ENCODE measurements at regions of chr3 and their contacts with region 1.

Region 1: DNA sequence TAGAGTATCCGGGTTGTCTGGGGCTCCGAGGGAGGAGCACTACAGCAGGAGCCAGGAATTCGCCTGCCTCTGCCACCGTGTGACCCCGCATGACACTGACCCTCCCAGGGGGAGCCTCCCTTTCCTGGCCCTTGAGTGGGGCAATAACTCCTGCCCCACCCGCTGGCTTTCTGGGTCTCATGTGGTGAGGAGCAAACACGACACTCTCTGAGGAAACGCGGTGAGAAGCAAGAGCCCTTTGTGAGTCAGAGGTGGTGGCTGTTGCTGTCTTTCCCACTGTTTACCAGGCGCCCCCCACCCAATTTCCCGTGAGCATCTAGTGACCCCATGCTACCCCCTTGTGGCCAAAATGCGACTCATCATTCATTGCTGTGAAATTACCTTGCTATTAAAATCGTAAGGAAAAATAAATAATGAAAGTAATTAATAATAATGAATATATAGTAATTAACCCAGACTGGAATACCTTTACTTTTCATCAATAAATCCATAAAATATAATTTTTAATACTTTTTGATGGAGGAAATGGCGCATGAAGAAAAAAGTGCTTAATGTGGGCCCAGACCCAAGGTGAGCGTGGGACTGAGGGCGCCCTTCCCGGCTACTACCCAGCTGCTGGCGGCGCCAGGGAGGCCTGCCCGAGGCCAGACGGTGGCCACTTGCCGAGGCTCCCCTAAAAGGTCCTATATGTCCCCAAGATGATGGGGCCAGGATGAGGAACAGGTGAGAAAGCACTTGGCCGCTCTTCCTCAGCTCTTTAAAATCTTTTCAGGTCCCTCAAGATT is 29.3 kb downstream of the CCNL1 start:
- DNase-seq: peak; percentile 48
- CTCF ChIP-seq: peak; percentile 61

Region 2: DNA sequence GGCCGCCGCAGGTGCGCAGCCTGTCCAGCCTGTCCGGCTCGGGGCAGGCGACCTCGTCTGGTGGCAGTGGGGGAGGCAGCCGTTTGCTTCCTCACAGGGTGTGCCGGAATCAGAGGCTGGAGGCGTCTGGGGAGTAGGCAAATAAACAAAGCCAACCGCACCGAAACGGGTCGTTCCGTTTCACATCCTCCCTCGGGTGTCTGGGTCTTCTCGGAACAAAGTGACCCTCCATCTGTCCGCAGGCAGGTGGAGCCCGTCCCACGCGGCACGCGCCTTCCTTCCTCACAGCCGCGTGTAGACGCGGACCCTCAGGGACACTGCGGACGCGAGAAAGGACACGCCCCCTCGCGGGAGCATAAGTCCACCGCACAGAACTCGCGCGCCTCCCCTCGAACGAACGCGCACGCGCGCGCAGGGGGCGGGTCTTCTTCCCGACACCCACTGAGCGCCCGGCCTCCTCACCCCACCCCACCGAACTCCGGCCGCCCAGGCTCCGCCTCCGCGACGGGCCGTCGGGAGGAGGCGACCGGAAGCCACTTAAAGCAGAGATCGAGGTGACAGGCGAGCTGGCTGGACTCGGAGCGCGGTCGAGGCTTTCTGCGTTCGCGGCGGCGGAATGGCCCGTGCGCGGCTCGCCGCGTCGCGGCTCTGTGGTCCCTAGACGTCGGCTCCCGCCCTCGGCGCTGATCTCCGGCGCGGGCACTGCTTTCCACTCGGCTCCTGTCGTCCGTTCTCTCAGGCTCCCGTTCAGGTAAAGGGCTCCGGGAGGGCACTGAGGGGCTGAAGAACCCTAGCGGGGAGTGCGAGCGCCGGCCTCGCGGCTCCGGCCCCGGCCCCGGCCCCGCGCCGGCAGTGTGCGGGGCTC is 456.4 kb before region 1 on chr3 and contains the start of gene TIPARP:
- in situ Hi-C with region 1: loop called (anchors 10 kb)
- DNase-seq: peak; percentile 97
- CTCF ChIP-seq: peak; percentile 89

Measured in GM13976 (cell line).